CD8-positive, alpha-beta memory T cell (primary cell): ENCODE measurements at regions of chr17 and their contacts with region 1.

Region 1: DNA sequence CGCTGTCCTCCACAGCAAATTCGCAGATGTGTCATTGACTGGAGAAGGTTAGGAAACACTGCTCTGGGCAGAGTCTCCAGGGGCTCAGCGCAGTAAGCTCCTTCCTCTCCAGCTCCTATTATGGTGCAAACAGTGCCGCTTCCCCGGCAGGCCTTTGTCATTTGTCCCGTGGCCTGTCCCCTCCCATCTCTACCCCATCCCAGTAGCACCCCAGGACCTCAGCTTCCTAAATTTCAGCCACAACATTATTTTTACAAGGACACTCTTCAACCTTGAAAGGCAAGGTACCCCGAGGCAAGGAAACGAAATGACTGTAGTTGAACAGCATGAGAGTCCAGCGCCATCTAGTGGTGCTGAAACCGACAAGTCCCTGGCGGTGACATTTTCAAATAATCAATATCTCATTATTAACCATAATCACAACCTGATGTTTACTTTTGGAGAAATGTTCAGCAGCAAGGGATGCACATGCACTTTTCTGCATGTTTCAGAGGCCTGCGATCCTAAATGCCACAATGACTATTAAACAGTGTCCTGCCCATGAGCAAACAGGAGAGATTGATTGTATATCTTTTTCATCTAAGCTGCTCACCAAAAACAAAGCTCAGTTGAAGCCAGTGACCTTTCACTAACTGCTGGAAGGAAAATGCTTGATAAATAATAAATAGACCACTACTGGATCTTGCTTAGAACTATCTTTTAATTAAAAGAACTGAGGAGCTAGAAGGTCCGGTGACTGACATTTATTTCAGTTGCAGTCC is 16.5 kb downstream of the MRPS23 start:
- DNase-seq: peak; percentile 43 to 75 (median 59)
- H3K4me3 ChIP-seq: peak overlapping the region; percentile 73
- H3K4me3 Mint-ChIP-seq: no peak overlapping the region
- H3K27ac ChIP-seq: no peak overlapping the region
- H3K27ac Mint-ChIP-seq: no peak overlapping the region
- H3K4me1 ChIP-seq: peaks cover 5% of the 10 kb centered on the region
- H3K4me1 Mint-ChIP-seq: peaks cover 0 to 5% (median 0%) of the 10 kb centered on the region in 3 donors
- H3K27me3 ChIP-seq: no peaks in the 10 kb centered on the region
- H3K27me3 Mint-ChIP-seq: no peaks in the 10 kb centered on the region

Region 2: DNA sequence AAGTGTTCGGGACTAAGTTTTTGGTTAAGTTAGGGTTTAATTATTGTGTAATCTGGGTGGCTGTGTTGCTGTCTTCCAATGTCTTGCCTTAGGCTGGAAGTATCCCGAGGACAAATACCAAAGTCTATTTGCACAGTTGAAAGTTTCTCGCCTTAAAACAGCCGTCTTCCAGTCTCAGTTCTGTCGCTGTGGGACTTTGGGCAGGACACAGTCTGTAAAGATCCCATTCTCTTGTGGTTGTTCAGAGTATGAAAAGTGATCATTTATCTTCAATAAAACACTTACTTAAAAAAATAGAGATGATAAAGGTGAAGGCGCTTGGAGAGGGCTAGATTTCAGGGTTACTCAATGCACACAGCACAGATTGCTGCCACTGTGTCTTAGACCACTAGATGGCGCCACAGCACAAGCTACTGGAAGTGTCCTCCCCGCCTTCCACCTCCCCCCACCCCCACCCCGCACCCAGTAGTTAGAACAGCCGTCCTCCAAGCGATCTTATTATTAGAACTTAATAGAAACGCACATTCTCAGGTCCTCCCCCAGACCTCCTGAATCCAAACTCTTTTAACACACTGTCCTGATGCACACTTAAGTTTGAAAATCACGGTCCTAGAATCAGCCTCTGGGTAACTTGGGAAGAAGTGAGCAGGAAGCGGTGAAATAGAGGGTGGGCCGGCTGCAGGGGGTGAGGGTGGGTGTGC is 702.4 kb before region 1 on chr17:
- CTCF ChIA-PET with region 1: interaction called, 12 read pairs
- POLR2A ChIA-PET with region 1: no interaction called
- DNase-seq: peak; percentile 66 to 85 (median 72)
- H3K4me3 ChIP-seq: no peak overlapping the region
- H3K4me3 Mint-ChIP-seq: peak overlapping the region in 2 of 7 donors; percentile 38 to 51
- H3K27ac ChIP-seq: no peak overlapping the region
- H3K27ac Mint-ChIP-seq: no peak overlapping the region
- H3K4me1 ChIP-seq: no peaks in the 10 kb centered on the region
- H3K4me1 Mint-ChIP-seq: peaks cover 0 to 5% (median 5%) of the 10 kb centered on the region in 3 donors
- H3K27me3 ChIP-seq: no peaks in the 10 kb centered on the region
- H3K27me3 Mint-ChIP-seq: peaks cover 3 to 6% of the 10 kb centered on the region in 2 donors

Region 3: DNA sequence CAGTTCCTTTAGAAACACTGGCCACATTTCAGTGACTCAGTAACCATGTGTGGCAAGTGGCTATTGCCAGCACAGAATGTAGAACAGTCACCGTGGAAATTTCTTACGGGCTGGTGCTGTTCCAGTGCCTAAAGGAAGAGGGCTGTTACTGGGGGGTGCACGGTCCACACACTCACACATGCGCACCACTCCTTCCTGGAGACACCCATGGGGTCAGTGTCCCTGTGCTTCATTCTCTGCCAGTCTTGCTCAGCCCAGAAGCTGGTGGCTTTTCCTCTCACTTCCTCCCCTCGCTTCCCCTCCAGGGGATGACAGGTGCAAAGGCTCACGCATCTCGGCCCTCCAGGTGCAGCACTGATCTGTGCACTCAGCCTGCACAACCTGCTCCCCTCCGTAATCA is 203.9 kb before region 1 on chr17:
- CTCF ChIA-PET with region 1: no interaction called
- POLR2A ChIA-PET with region 1: no interaction called
- DNase-seq: no peak
- H3K4me3 ChIP-seq: no peak overlapping the region
- H3K4me3 Mint-ChIP-seq: no peak overlapping the region
- H3K27ac ChIP-seq: no peak overlapping the region
- H3K27ac Mint-ChIP-seq: peak overlapping the region in 3 of 8 donors; percentile 11 to 75 (median 73)
- H3K4me1 ChIP-seq: no peaks in the 10 kb centered on the region
- H3K4me1 Mint-ChIP-seq: peaks cover 0 to 11% (median 4%) of the 10 kb centered on the region in 3 donors
- H3K27me3 ChIP-seq: no peaks in the 10 kb centered on the region
- H3K27me3 Mint-ChIP-seq: peaks cover 0 to 2% of the 10 kb centered on the region in 2 donors

Region 4: GRCh38 chr17:57818066-57818465 is 15.3 kb before region 1 on chr17:
- CTCF ChIA-PET with region 1: interaction called, 12 read pairs
- POLR2A ChIA-PET with region 1: no interaction called
- DNase-seq: no peak
- H3K4me3 ChIP-seq: no peak overlapping the region
- H3K4me3 Mint-ChIP-seq: no peak overlapping the region
- H3K27ac ChIP-seq: no peak overlapping the region
- H3K27ac Mint-ChIP-seq: no peak overlapping the region
- H3K4me1 ChIP-seq: no peaks in the 10 kb centered on the region
- H3K4me1 Mint-ChIP-seq: no peaks in the 10 kb centered on the region
- H3K27me3 ChIP-seq: peaks cover 10% of the 10 kb centered on the region
- H3K27me3 Mint-ChIP-seq: peaks cover 13 to 28% of the 10 kb centered on the region in 2 donors